ENCODE measurements at regions of chr5 and their contacts with region 1.

Region 1: GRCh38 chr5:132526290-132526973 is 16.9 kb downstream of the IL5 start:
- DNase-seq: peak; percentile 36
- H3K4me3 Mint-ChIP-seq: no peak overlapping the region
- H3K27ac Mint-ChIP-seq: peak overlapping the region; percentile 31
- H3K4me1 Mint-ChIP-seq: peaks cover 54% of the 10 kb centered on the region
- H3K27me3 Mint-ChIP-seq: no peaks in the 10 kb centered on the region

Region 2: DNA sequence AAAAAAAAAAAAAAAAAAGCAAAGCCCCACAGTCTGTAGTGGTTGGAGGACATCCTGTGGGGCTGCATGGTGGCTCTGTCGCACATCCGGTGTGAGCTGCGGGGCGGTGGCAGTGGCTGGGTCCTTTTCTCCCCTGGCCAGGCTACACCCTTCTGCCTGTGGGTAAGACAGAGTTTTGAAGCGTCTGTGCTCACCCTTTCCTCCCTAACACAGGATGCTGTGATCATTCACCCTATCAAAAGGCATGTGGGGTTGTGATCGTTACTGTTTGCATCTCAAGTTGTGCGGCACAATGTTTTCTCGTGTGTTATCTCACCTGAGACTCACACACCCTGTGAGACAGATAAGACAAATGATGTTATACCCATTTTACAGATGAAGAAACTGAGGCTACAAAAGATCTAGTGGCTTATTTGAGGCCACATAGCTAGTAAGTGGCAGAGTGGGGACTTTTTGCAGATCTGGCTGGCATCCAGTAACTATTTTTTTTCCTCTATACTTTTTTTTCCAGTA is 53.4 kb before region 1 on chr5:
- intact Hi-C with region 1: no loop called
- DNase-seq: peak; percentile 86
- H3K4me3 Mint-ChIP-seq: peak overlapping the region; percentile 51
- H3K27ac Mint-ChIP-seq: peak overlapping the region; percentile 94
- H3K4me1 Mint-ChIP-seq: peaks cover 58% of the 10 kb centered on the region
- H3K27me3 Mint-ChIP-seq: no peaks in the 10 kb centered on the region

Region 3: GRCh38 chr5:132566657-132567056 is 40.2 kb after region 1 on chr5:
- intact Hi-C with region 1: loop called (anchors 5 kb)
- DNase-seq: no peak
- H3K4me3 Mint-ChIP-seq: peak overlapping the region; percentile 0
- H3K27ac Mint-ChIP-seq: peak overlapping the region; percentile 44
- H3K4me1 Mint-ChIP-seq: peaks cover 44% of the 10 kb centered on the region
- H3K27me3 Mint-ChIP-seq: no peaks in the 10 kb centered on the region

Region 4: DNA sequence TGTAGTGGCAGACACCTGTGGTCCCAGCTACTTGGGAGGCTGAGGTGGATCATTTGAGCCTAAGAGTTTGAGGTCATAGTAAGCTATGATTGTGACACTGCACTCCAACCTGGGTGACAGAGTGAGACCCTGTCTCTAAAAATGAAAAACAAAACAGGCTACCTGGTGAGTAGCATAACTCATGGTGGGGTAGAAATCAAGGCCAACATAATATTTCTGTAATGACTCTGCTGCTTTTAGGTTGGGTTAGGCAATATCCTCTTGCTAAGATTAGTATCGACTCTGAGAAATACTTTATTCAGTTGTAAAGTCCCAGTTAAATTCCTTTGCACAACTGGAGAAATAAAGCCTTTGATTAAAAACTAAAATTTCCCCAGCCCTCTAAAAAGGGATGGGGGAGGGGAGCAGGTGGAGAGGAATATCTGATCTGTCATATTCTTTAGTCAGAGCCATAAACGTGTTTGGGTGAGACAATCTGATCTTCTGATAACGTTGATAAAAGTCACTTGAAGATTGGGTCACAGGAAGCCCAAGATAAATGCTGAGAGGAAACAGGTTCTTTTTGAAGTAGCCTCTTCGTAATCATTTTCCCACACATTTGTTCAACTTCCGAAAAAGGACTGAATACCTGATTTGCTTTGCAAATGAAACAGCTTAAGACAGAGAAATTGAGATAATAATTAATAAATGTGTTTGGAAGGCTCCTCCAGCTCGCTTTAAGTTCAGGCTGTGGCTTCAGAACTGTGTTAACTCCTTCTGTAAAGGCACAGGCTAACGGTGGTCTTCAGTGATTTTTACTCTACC is 162.3 kb after region 1 on chr5:
- intact Hi-C with region 1: loop called (anchors 1 kb)
- DNase-seq: no peak
- H3K4me3 Mint-ChIP-seq: no peak overlapping the region
- H3K27ac Mint-ChIP-seq: peak overlapping the region; percentile 68
- H3K4me1 Mint-ChIP-seq: peaks cover 45% of the 10 kb centered on the region
- H3K27me3 Mint-ChIP-seq: peaks cover 1% of the 10 kb centered on the region

Region 5: GRCh38 chr5:132736853-132737833 is 210.7 kb after region 1 on chr5 and contains the start of gene KIF3A:
- intact Hi-C with region 1: loop called (anchors 2 kb)
- DNase-seq: peak; percentile 98
- H3K4me3 Mint-ChIP-seq: peak within 1 kb of the TSS; percentile 85
- H3K27ac Mint-ChIP-seq: peak within 1 kb of the TSS; percentile 86
- H3K4me1 Mint-ChIP-seq: peaks cover 36% of the 10 kb centered on the region
- H3K27me3 Mint-ChIP-seq: peaks cover 14% of the 10 kb centered on the region
- total RNA-seq, gene KIF3A: 40.7 and 41.4 TPM in 2 replicates

Region 6: DNA sequence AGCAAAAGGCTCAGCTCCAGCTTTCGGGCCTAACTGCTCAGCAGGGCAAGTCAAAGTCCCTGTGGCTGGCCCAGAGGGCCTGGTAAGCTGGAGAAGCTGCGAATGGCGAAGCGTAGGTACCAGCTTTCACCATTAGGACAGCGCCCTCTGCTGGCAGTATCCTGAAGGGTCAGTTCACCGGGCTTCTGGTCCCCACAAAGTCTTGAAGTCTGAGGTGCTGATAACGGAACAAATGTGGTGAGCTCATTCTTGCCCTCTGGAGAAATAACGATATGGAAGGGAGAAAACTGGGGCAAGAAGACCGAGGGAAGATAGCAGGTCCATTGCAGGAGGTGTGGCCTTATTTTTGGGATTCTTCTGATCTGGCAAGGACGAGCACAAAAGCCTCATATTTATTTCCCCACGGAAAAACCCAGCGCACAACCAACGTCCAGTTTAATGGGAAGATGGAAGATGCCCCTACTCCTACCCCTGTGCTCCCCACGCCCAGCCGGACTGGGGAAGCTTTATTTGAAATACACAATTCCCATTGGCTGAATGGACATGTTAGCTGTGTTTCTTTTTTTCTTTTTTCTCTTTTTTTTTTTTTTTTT is 293.8 kb after region 1 on chr5:
- intact Hi-C with region 1: loop called (anchors 1 kb)
- DNase-seq: peak; percentile 81
- H3K4me3 Mint-ChIP-seq: no peak overlapping the region
- H3K27ac Mint-ChIP-seq: no peak overlapping the region
- H3K4me1 Mint-ChIP-seq: peaks cover 15% of the 10 kb centered on the region
- H3K27me3 Mint-ChIP-seq: peaks cover 59% of the 10 kb centered on the region

Measured in activated T-helper 2 cell treated with anti-CD3 and anti-CD28 coated beads, Interferon-gamma antibody, Interleukin-2, Interleukin-4, amounts not matched to agents 10 μg/mL and 5 μg/mL and 100 μg/mL, durations not matched to agents 14 hours and 24 hours and 36 hours (primary cell).